Ascending aorta (tissue), 2 donors: ENCODE measurements at regions of chr2 and their contacts with region 1.

Region 1: DNA sequence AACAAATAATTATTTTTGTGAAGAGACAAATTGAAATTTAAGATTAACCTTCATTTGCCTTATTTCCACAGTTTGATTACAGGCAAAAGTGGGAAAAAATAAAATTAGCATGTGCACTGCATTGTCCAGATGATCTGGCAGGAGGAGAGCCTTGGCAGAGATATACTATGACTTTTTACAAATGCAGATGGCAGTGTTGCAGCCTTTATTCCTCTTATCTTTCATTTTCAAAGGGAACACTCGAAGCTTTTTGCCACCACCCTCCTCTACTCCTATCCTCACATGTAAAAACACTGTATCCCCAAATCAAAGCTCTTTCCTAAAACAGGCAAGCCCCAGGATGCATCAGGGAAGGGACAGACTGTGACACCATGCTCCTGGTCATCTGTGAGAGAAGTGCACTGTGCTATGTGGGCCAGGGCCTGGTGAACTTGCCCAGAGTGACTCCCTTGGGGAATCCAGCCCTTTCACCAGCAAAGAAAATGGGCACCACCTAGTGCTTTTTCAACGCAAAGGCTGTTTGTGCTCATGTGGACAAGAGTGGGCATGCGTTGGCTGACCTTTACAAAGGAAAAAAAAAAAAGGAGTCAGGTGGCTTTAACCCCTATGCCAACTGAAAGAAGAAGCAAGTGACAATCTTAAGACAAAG is 74.7 kb upstream of the ETAA1 start:
- DNase-seq: peak in 1 of 2 donors; percentile 77
- H3K4me3 ChIP-seq: peak overlapping the region in 1 of 2 donors; percentile 11
- H3K27ac ChIP-seq: peak overlapping the region; percentile 25 to 44
- H3K4me1 ChIP-seq: peaks cover 0 to 10% of the 10 kb centered on the region in 2 donors
- H3K27me3 ChIP-seq: no peaks in the 10 kb centered on the region
- CTCF ChIP-seq: peak; percentile 40 to 70 (median 61)

Region 2: GRCh38 chr2:67366832-67367412 is 44.4 kb after region 1 on chr2:
- intact Hi-C with region 1: no loop called
- DNase-seq: no peak
- H3K4me3 ChIP-seq: no peak overlapping the region
- H3K27ac ChIP-seq: no peak overlapping the region
- H3K4me1 ChIP-seq: peaks cover 0 to 8% of the 10 kb centered on the region in 2 donors
- H3K27me3 ChIP-seq: no peaks in the 10 kb centered on the region
- CTCF ChIP-seq: no peak

Region 3: GRCh38 chr2:67656875-67657274 is 334.4 kb after region 1 on chr2:
- intact Hi-C with region 1: loop called (anchors 5 kb)
- DNase-seq: no peak
- H3K4me3 ChIP-seq: no peak overlapping the region
- H3K27ac ChIP-seq: peak overlapping the region; percentile 33 to 50
- H3K4me1 ChIP-seq: peaks cover 0 to 13% of the 10 kb centered on the region in 2 donors
- H3K27me3 ChIP-seq: no peaks in the 10 kb centered on the region
- CTCF ChIP-seq: no peak

Region 4: GRCh38 chr2:67712484-67712883 is 390.0 kb after region 1 on chr2:
- intact Hi-C with region 1: no loop called
- DNase-seq: no peak
- H3K4me3 ChIP-seq: no peak overlapping the region
- H3K27ac ChIP-seq: no peak overlapping the region
- H3K4me1 ChIP-seq: no peaks in the 10 kb centered on the region
- H3K27me3 ChIP-seq: no peaks in the 10 kb centered on the region
- CTCF ChIP-seq: no peak

Region 5: DNA sequence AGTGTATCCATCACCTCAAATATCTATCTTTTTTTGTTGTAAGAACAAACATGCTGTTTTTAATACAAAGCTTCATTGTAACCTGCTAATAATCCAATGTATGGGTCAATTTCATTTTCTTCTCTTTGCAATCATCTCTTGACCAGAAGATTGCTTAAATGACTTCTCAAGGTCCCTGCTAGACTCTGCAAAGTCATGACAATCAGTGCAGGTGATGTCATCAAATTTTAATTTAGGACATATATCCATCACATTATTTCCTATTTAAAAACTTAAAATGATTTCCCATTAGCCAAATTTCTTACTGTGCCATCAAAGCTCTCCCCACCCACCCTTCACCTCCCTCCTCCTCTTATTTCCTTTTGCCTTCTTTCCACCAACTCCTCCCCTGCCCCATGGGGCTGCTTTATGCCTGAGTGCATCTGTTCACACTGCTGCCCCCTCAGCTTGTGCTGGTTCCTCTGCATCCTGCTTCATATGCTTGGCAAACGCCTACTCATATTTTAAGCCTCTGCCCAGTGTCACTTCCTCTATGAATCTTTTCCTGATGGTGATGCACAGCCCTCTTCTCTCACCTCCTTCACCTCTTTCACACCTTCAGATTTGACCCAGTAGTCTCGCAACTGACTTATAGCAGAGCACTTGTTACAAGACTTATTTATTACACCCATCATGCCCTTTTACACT is 1062.9 kb after region 1 on chr2:
- intact Hi-C with region 1: no loop called
- DNase-seq: no peak
- H3K4me3 ChIP-seq: no peak overlapping the region
- H3K27ac ChIP-seq: no peak overlapping the region
- H3K4me1 ChIP-seq: no peaks in the 10 kb centered on the region
- H3K27me3 ChIP-seq: no peaks in the 10 kb centered on the region
- CTCF ChIP-seq: no peak